ENCODE measurements at regions of chr10 and their contacts with region 1.

Region 1: DNA sequence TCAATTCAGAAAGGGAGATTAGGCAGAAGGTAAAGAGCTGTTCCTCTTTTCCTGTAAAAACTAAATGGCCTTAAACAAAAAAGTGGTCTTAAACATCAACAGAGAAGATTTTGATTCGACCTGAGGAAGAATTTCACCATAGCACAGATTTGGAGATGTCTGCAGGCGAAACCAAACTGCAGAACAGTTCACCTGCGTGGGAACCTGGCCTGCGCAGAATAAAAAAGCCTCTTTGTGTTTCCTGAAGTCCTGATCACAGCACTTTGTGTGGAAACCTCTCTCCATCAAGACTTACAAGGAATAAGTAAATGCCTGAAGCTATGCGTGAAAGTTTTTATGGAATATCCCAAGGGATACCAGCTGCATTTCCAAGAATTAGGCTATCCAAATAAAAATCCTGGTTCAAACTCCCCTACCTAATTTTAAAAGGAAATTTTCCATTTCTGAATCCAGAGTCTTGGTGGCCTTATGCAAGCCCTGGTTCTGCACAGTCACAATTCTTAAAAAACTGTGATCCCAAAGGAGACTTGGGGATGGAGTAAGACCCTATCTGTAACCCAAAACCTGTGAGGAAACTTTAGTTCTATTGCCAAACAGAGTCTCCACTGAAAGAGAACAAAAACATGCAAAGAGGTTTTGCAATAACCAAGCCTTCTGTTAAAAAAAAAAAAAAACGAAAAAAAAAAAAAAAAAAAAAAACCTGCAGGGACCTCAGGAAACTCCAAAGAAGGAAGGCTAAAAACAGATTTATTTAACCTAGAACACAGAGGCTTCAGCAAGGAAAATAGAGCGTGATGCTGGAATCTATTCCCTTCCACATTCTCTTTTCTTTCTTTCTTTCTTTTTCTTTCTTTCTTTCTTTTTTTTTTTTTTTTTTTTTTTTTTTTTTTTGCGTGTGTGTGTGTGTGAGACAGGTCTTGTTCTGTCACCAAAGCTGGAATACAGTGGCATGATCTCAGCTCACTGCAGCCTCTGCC is 10.4 kb downstream of the CALML3 start:
- DNase-seq: no peak
- H3K4me3 ChIP-seq: no peak overlapping the region
- H3K27ac ChIP-seq: peak overlapping the region; percentile 74
- H3K4me1 ChIP-seq: peaks cover 30% of the 10 kb centered on the region
- H3K27me3 ChIP-seq: no peaks in the 10 kb centered on the region
- CTCF ChIP-seq: no peak
- POLR2A ChIP-seq: no peak

Region 2: GRCh38 chr10:5446390-5446926 is 88.7 kb before region 1 on chr10:
- intact Hi-C with region 1: loop called (anchors 10 kb)
- DNase-seq: peak in 1 of 2 donors; percentile 96
- H3K4me3 ChIP-seq: peak overlapping the region; percentile 37 to 56
- H3K27ac ChIP-seq: peak overlapping the region; percentile 81
- H3K4me1 ChIP-seq: peaks cover 16% of the 10 kb centered on the region
- H3K27me3 ChIP-seq: no peaks in the 10 kb centered on the region
- CTCF ChIP-seq: no peak
- POLR2A ChIP-seq: peak in 1 of 2 donors; percentile 78

Region 3: GRCh38 chr10:5623081-5623748 is 88.0 kb after region 1 on chr10:
- intact Hi-C with region 1: loop called (anchors 10 kb)
- DNase-seq: no peak
- H3K4me3 ChIP-seq: no peak overlapping the region
- H3K27ac ChIP-seq: peak overlapping the region; percentile 60
- H3K4me1 ChIP-seq: peaks cover 22% of the 10 kb centered on the region
- H3K27me3 ChIP-seq: no peaks in the 10 kb centered on the region
- CTCF ChIP-seq: peak; percentile 88 to 94 (median 91)
- POLR2A ChIP-seq: no peak

Measured in vagina (tissue), 2 donors.